GM12878 (cell line): ENCODE measurements at regions of chr1 and their contacts with region 1.

Region 1: DNA sequence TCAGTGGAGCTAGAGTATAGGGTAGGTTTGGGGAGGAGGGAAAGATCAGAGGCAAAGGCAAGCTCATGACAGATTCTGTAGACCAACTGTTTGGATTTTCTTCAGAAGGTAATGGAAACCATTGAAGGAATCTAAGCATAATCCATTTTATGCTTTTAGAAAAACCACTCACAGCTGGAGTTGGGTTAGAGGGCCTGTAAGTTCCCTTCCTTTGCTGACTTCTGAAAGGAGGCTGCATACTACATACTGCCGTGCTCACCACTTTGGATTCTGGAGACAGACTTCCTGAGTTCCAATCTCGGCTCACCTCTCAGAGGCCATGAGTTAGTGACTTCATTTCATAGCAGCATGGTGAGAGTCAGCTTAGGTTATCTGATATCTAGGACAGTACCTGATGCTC is 6.4 kb upstream of the SYT2 start:
- DNase-seq: no peak
- ATAC-seq: no peak
- H3K4me3 ChIP-seq: no peak overlapping the region
- H3K27ac ChIP-seq: no peak overlapping the region
- H3K4me1 ChIP-seq: no peaks in the 10 kb centered on the region
- H3K27me3 ChIP-seq: peaks cover under 1 to 13% of the 10 kb centered on the region in 2 experiments
- CTCF ChIP-seq: no peak
- EP300 ChIP-seq: no peak
- POLR2A ChIP-seq: no peak
- RAD21 ChIP-seq: no peak

Region 2: DNA sequence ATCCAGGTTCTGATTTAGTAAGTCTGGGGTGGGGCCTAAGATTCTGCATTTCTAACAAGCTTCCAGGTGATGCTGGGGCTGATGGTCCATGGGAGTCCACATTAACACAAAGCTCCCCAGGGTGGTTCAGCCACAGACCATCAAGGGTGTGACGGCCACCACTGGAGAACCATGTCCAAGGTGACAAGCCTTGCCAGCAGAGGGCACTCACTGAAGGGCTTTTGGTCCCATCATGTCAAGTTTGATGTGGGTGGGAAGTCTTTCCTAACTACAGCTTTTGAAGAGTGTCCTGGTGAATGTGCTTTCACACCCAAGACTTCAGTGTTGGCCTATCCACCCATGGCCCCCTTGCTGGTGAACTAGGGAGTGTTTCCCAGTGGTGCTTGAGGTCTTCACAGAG is 442.0 kb before region 1 on chr1:
- CTCF ChIA-PET with region 1: interaction called, 10 read pairs
- POLR2A ChIA-PET with region 1: no interaction called
- RAD21 ChIA-PET with region 1: no interaction called
- SMC1A ChIA-PET with region 1: interaction called, 3 read pairs
- in situ Hi-C with region 1: no loop called
- intact Hi-C with region 1: no loop called
- DNase-seq: no peak
- ATAC-seq: peak; percentile 82
- H3K4me3 ChIP-seq: no peak overlapping the region
- H3K27ac ChIP-seq: no peak overlapping the region
- H3K4me1 ChIP-seq: no peaks in the 10 kb centered on the region
- H3K27me3 ChIP-seq: peaks cover 0 to 2% of the 10 kb centered on the region in 2 experiments; a peak in 1 of 4 replicates
- CTCF ChIP-seq: peak; percentile 48 to 71 (median 57)
- EP300 ChIP-seq: no peak
- POLR2A ChIP-seq: no peak
- RAD21 ChIP-seq: peak; percentile 48

Region 3: DNA sequence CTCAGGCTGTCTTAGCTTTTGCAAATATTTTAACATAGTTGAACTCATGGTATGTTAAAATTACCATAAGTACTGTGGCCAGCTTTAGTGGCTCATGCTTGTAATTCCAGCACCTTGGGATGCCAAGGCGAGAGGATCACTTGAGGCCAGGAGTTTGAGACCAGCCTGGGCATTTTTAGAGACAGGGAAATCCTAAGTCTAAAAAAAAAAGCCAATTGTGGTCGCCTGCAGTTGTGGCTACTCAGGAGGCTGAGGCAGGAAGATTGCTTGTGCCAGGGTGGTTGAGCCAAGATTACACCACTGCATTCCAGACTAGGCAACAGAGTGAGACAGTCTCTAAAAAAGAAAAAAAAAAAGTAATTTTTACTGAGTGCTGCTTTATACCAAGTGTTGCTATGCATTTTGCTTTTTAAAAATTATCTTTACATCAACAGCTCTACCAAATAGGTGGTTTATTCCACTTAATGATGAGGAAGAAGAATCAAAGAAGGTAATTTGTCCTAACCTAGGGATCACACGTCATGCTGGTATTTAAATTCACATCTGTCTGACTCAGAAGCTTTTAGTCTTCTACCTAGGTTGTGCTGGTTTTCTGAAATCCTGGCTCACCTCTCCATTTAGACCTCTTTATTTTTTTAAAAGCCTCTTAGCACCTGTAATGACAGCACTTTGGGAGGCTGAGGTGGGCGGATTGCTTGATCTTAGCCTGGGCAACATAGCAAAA is 351.4 kb before region 1 on chr1:
- CTCF ChIA-PET with region 1: no interaction called
- POLR2A ChIA-PET with region 1: no interaction called
- RAD21 ChIA-PET with region 1: no interaction called
- SMC1A ChIA-PET with region 1: no interaction called
- in situ Hi-C with region 1: no loop called
- intact Hi-C with region 1: no loop called
- DNase-seq: no peak
- ATAC-seq: no peak
- H3K4me3 ChIP-seq: no peak overlapping the region
- H3K27ac ChIP-seq: no peak overlapping the region
- H3K4me1 ChIP-seq: no peaks in the 10 kb centered on the region
- H3K27me3 ChIP-seq: no peaks in the 10 kb centered on the region
- CTCF ChIP-seq: no peak
- EP300 ChIP-seq: no peak
- POLR2A ChIP-seq: no peak
- RAD21 ChIP-seq: no peak

Region 4: GRCh38 chr1:202462342-202463076 is 254.1 kb before region 1 on chr1:
- CTCF ChIA-PET with region 1: interaction called, 17 read pairs
- POLR2A ChIA-PET with region 1: no interaction called
- RAD21 ChIA-PET with region 1: interaction called, 7 read pairs
- SMC1A ChIA-PET with region 1: interaction called, 10 read pairs
- in situ Hi-C with region 1: no loop called
- intact Hi-C with region 1: loop called (anchors 2 kb)
- DNase-seq: no peak
- ATAC-seq: no peak
- H3K4me3 ChIP-seq: no peak overlapping the region
- H3K27ac ChIP-seq: no peak overlapping the region
- H3K4me1 ChIP-seq: no peaks in the 10 kb centered on the region
- H3K27me3 ChIP-seq: no peaks in the 10 kb centered on the region
- CTCF ChIP-seq: no peak
- EP300 ChIP-seq: no peak
- POLR2A ChIP-seq: no peak
- RAD21 ChIP-seq: no peak

Region 5: DNA sequence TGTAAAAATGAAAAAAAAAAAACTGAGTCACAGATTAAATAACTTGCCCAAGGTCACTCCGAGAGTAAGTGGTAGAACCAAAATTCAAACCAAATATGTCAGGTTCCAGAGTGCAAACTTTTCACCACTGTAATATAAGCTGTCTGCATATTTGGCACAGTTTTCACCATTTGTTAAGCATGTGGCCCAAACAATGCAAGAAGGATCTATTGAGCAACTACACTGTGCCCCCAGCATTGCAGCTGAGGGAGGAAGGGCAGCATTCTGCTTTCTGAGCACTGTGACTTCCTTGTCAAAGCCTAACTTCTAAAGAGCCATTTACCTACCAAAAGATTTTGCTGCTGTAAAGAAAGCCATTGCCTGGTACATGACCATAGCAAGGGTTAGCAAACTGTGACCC is 139.8 kb before region 1 on chr1:
- CTCF ChIA-PET with region 1: interaction called, 27 read pairs
- POLR2A ChIA-PET with region 1: no interaction called
- RAD21 ChIA-PET with region 1: interaction called, 12 read pairs
- SMC1A ChIA-PET with region 1: interaction called, 13 read pairs
- in situ Hi-C with region 1: no loop called
- intact Hi-C with region 1: loop called (anchors 10 kb)
- DNase-seq: no peak
- ATAC-seq: no peak
- H3K4me3 ChIP-seq: no peak overlapping the region
- H3K27ac ChIP-seq: no peak overlapping the region
- H3K4me1 ChIP-seq: no peaks in the 10 kb centered on the region
- H3K27me3 ChIP-seq: no peaks in the 10 kb centered on the region
- CTCF ChIP-seq: no peak
- EP300 ChIP-seq: no peak
- POLR2A ChIP-seq: no peak
- RAD21 ChIP-seq: no peak

Region 6: GRCh38 chr1:203057911-203058675 is 341.4 kb after region 1 on chr1:
- CTCF ChIA-PET with region 1: no interaction called
- POLR2A ChIA-PET with region 1: no interaction called
- RAD21 ChIA-PET with region 1: no interaction called
- SMC1A ChIA-PET with region 1: no interaction called
- in situ Hi-C with region 1: no loop called
- intact Hi-C with region 1: no loop called
- DNase-seq: no peak
- ATAC-seq: no peak
- H3K4me3 ChIP-seq: no peak overlapping the region
- H3K27ac ChIP-seq: no peak overlapping the region
- H3K4me1 ChIP-seq: no peaks in the 10 kb centered on the region
- H3K27me3 ChIP-seq: no peaks in the 10 kb centered on the region; a peak in 1 of 4 replicates
- CTCF ChIP-seq: no peak
- EP300 ChIP-seq: no peak
- POLR2A ChIP-seq: no peak
- RAD21 ChIP-seq: no peak